Right cardiac atrium (tissue), 5 donors: ENCODE measurements at regions of chr7 and their contacts with region 1.

Region 1: DNA sequence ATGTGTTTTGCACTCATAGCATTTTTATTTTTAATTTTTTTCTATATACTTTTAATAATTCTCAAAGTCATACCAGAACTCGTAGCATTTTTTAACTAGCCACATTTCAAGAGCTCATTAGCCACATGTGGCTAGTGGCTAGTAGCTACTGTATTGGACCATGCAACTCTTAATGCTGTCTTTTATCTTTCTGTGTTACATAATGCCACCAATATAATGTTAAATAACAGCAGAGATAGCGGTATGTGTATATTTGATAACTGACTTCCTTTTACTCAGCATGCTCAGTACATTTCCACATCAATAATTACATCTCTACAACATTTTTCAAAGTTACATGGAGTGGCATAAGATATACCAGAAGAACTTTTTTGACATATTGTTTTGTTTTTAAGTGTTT is 91.4 kb downstream of the CDK13 start:
- DNase-seq: no peak
- ATAC-seq: no peak
- H3K4me3 ChIP-seq: no peak overlapping the region
- H3K27ac ChIP-seq: no peak overlapping the region
- H3K4me1 ChIP-seq: no peaks in the 10 kb centered on the region
- H3K27me3 ChIP-seq: no peaks in the 10 kb centered on the region

Region 2: DNA sequence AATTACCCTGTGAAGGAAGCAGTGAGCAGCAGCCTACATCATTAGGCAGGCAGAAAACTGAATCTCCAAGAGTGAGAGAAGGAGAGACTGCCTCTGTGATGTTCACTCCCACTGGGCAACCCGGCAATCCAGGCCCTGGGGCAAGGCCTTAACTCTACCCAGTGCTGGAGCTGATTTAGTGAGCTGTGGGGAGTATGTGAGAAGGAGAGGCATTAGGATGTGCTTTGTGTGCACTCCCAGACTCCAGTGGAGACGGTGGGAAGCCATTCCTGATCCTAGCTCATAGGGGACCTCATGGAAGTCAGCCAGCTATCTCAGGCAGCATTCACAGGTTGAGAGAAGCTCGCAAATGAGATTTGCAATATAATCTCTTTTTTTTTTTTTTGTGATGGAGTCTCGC is 132.5 kb before region 1 on chr7:
- intact Hi-C with region 1: loop called in 1 of 4 experiments (anchors 5 kb)
- DNase-seq: no peak
- ATAC-seq: no peak
- H3K4me3 ChIP-seq: no peak overlapping the region
- H3K27ac ChIP-seq: no peak overlapping the region
- H3K4me1 ChIP-seq: peaks cover 3% of the 10 kb centered on the region
- H3K27me3 ChIP-seq: no peaks in the 10 kb centered on the region

Region 3: DNA sequence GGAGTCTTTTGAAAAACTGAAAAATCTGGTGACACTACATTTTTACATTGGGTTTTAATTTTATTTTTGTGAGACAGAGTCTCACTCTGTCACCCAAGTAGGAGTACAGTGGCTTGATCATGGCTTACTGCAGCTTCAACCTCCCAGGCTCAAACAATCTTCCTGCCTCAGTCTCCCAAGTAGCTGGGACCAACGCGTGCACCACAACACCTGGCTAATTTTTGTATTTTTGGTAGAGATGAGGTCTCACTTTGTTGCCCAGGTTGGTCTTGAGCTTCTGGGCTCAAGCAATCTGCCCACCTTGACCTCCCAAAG is 81.4 kb after region 1 on chr7:
- intact Hi-C with region 1: no loop called
- DNase-seq: no peak
- ATAC-seq: no peak
- H3K4me3 ChIP-seq: no peak overlapping the region
- H3K27ac ChIP-seq: no peak overlapping the region
- H3K4me1 ChIP-seq: peaks cover 1% of the 10 kb centered on the region
- H3K27me3 ChIP-seq: no peaks in the 10 kb centered on the region

Region 4: DNA sequence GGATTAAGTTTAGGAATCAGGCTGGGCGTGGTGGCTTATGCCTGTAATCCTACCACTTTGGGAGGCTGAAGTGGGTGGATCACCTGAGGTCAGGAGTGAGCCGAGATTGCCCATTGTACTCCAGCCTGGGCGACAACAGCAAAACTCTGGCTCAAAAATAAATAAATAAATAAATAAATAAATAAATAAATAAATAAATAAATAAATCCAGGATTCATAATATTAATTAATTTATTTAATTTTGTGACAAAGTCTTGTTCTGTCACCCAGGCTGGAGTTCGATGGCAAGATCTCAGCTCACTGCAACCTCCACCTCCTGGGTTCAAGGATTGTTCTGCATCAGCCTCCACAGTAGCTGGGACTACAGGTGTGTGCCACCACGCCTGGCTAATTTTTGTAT is 97.5 kb after region 1 on chr7:
- intact Hi-C with region 1: no loop called
- DNase-seq: no peak
- ATAC-seq: no peak
- H3K4me3 ChIP-seq: no peak overlapping the region
- H3K27ac ChIP-seq: no peak overlapping the region
- H3K4me1 ChIP-seq: no peaks in the 10 kb centered on the region
- H3K27me3 ChIP-seq: no peaks in the 10 kb centered on the region

Region 5: DNA sequence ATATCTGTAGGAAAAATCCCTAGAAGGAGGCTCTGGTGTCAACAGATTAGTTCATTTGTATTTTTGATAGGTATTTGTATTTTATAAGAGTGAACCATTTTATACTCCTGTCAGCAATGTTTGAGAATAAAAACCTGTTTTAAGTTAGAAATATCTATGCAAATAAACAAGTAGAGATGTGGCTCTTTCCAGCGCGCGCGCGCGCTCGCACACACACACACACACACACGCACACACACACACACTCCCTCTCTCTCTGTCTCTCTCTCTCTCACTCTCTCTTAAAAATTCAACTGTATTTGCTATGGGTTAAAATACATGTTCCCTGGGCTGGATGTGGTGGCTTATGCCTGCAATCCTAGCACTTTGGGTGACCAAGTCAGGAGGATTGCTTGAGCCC is 207.2 kb after region 1 on chr7:
- intact Hi-C with region 1: no loop called
- DNase-seq: no peak
- ATAC-seq: no peak
- H3K4me3 ChIP-seq: no peak overlapping the region
- H3K27ac ChIP-seq: no peak overlapping the region
- H3K4me1 ChIP-seq: no peaks in the 10 kb centered on the region
- H3K27me3 ChIP-seq: no peaks in the 10 kb centered on the region